Esophagus squamous epithelium (tissue), 5 donors: ENCODE measurements at regions of chr21 and their contacts with region 1.

Region 1: DNA sequence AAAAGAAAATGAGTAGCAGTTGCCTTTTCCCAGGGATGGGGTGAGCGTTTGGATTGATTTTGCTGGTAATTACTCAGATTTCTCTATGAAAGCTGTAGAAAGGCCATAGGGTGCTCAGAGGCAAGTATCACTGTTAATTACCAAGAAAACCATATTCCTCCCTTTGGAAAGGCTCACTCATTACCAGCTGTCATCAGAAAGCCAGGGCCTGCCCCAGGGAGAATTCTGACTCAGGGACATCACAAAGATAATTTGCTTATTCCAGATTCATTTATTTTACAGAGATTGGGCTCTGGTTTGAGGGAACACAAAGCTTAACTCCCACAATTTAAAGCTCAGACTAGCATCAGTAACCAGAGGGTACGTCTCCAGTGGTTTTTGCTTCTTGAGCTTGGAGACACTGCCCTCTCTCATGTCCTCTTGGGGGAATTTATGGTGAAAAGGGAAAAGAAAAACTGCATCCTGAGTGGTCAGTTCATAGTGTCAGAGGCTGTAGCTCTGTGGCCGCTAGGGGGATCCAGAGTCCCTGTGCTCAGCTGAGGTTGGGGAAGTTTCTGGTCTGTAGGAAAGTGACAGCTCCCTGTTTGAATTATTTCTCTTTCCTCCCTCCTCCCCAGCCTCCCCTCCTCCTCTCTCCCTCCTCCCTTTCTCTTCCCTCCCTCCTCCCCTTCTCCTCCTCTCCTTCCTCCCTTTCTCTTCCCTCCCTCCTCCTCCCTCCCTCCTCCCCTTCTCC is 204.3 kb downstream of the KCNJ6 start:
- DNase-seq: no peak
- H3K4me3 ChIP-seq: no peak overlapping the region
- H3K27ac ChIP-seq: no peak overlapping the region
- H3K4me1 ChIP-seq: no peaks in the 10 kb centered on the region
- H3K27me3 ChIP-seq: peaks cover 0 to 5% (median 0%) of the 10 kb centered on the region in 4 donors
- CTCF ChIP-seq: peak in 5 of 6 experiments; percentile 59 to 84 (median 75)
- POLR2A ChIP-seq: no peak

Region 2: DNA sequence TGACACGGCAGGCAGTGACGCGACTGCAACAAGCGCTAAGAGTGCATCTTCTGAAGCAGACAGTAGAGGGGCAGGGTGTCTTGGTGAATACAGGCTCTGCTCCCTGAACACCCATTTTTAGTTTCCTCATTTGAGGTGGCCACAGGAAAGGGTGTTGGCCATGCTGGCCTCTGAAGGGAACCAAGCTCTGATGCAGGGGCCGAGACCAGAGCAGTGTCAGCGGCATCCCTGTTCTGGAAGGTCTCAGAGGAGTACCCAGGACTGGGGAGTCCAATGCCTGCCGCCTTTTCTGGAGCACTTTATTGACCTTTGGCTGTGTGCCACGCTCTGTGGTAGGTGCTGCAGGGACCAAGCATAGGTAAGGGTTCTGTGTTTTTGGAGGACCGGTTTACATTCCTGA is 103.9 kb after region 1 on chr21:
- intact Hi-C with region 1: no loop called
- DNase-seq: no peak
- H3K4me3 ChIP-seq: no peak overlapping the region
- H3K27ac ChIP-seq: no peak overlapping the region
- H3K4me1 ChIP-seq: no peaks in the 10 kb centered on the region
- H3K27me3 ChIP-seq: peaks cover 0 to 7% (median 0%) of the 10 kb centered on the region in 4 donors
- CTCF ChIP-seq: no peak
- POLR2A ChIP-seq: no peak

Region 3: DNA sequence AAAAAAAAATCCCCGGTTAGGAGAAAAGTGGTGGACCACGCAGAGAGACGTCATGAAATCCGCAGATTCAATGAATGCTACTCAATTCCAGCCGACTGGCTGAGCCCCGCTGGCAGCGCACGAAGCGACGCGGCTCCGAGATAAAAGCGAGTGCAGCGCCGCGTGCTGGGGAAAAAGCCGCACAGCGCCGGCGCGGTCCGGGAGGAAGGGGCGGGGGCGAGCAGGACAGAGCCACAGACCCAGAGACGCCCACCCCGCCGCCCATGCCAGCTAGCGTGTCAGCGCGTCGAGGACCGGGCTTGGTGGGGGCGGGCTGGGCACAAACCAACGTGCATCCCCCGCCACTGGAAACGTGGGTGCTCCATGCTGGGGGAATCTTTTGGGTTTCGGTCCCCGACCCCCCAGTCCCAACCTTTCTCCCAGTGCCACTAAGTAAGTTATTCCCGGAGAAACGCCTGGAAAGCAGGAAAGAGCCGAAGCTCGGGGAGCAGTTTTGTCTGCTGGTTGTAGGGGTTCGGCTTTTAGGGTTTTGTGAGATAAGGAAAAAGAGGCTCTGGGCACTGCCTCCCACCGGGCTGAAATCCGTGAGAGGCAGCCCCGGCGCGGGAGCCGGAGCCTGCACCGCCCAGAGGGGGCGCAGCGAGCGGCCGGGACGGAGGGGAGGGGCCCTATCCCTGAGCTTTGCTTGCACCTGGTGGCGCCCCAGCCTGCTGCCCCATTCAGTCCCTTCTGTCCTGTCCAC is 204.5 kb after region 1 on chr21 and contains the start of gene KCNJ6:
- intact Hi-C with region 1: loop called (anchors 10 kb)
- DNase-seq: no peak
- H3K4me3 ChIP-seq: peak within 1 kb of the TSS in 3 of 4 donors; percentile 5 to 49 (median 33)
- H3K27ac ChIP-seq: no peak within 1 kb of the TSS
- H3K4me1 ChIP-seq: peaks cover 9 to 18% (median 14%) of the 10 kb centered on the region in 3 donors
- H3K27me3 ChIP-seq: peaks cover 4 to 98% (median 26%) of the 10 kb centered on the region in 4 donors
- CTCF ChIP-seq: peak in 5 of 6 experiments; percentile 11 to 62 (median 42)
- POLR2A ChIP-seq: no peak
- total RNA-seq, gene KCNJ6: not detected

Region 4: DNA sequence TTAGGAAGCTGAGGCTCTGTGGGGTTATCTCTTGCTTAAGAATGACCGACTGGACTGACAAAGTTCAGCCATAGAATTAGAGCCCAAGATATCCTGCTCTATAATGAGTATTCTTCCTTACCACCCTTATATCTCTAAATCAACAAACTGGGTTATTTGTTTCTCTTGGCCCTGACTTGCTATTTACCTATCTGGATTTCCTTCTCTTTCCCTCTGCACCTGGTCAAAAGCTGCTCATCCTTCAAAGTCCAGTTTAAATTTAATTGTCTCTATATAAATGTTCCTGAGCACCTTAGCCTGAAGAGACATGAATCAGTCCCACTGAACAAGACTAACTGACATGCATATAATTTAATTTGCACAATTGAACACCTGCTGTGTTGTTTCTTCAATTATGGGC is 417.7 kb after region 1 on chr21:
- intact Hi-C with region 1: loop called (anchors 5 kb)
- DNase-seq: no peak
- H3K4me3 ChIP-seq: no peak overlapping the region
- H3K27ac ChIP-seq: no peak overlapping the region
- H3K4me1 ChIP-seq: no peaks in the 10 kb centered on the region
- H3K27me3 ChIP-seq: peaks cover 0 to 83% (median 0%) of the 10 kb centered on the region in 4 donors
- CTCF ChIP-seq: no peak
- POLR2A ChIP-seq: no peak